Spleen (tissue), 13 donors: ENCODE measurements at regions of chr12 and their contacts with region 1.

Region 1: GRCh38 chr12:11067514-11067913 is 5.4 kb upstream of the TAS2R46 start:
- DNase-seq: no peak
- H3K4me3 ChIP-seq: no peak overlapping the region
- H3K27ac ChIP-seq: no peak overlapping the region
- H3K4me1 ChIP-seq: no peaks in the 10 kb centered on the region
- H3K27me3 ChIP-seq: no peaks in the 10 kb centered on the region
- CTCF ChIP-seq: no peak
- POLR2A ChIP-seq: no peak

Region 2: GRCh38 chr12:10838461-10838860 is 229.1 kb before region 1 on chr12:
- intact Hi-C with region 1: no loop called
- DNase-seq: no peak
- H3K4me3 ChIP-seq: no peak overlapping the region
- H3K27ac ChIP-seq: no peak overlapping the region
- H3K4me1 ChIP-seq: no peaks in the 10 kb centered on the region
- H3K27me3 ChIP-seq: no peaks in the 10 kb centered on the region
- CTCF ChIP-seq: no peak
- POLR2A ChIP-seq: no peak

Region 3: DNA sequence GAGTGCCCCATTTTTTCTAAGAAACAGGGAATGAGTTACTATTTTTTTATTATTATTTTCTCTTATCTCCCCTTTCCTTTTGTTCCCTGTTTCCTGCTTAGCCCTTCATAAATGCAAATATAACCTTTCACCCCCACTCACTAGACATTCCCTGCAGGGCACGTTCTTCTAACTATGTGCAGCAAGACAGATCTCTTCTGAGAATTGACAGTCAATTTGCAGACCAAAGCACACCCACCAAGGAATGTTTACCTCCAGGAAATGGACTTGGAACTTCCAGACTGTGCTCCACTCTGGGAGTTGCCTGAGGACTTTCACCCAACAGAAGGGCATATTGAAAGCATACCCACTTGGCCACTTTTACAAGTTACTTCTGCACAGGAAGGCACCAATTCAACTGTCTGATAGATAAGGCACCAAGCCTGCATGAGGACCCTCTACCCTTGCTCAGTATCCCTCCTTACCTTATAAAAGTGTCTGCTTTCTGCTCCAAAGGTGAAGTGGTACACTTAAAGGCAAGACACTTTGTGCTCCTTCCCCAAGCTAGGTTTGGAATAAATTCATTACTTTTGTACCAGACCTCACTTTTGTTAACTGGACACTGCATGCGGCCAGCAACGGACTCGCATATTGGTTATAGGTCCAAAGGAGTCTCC is 51.6 kb before region 1 on chr12:
- intact Hi-C with region 1: loop called (anchors 2 kb)
- DNase-seq: no peak
- H3K4me3 ChIP-seq: no peak overlapping the region
- H3K27ac ChIP-seq: no peak overlapping the region
- H3K4me1 ChIP-seq: no peaks in the 10 kb centered on the region
- H3K27me3 ChIP-seq: no peaks in the 10 kb centered on the region
- CTCF ChIP-seq: no peak
- POLR2A ChIP-seq: no peak

Region 4: GRCh38 chr12:12486661-12487240 is 1419.2 kb after region 1 on chr12:
- intact Hi-C with region 1: no loop called
- DNase-seq: no peak
- H3K4me3 ChIP-seq: no peak overlapping the region
- H3K27ac ChIP-seq: peak overlapping the region in 4 of 8 donors; percentile 2 to 19 (median 10)
- H3K4me1 ChIP-seq: peaks cover 0 to 31% (median 8%) of the 10 kb centered on the region in 6 donors
- H3K27me3 ChIP-seq: no peaks in the 10 kb centered on the region
- CTCF ChIP-seq: no peak
- POLR2A ChIP-seq: no peak